Dendritic cell treated with granulocyte-macrophage colony-stimulating factor and Interleukin-4, amounts not matched to agents 40 ng/mL and 50 ng/mL, for 4 days (primary cell): ENCODE measurements at regions of chrX and their contacts with region 1.

Region 1: DNA sequence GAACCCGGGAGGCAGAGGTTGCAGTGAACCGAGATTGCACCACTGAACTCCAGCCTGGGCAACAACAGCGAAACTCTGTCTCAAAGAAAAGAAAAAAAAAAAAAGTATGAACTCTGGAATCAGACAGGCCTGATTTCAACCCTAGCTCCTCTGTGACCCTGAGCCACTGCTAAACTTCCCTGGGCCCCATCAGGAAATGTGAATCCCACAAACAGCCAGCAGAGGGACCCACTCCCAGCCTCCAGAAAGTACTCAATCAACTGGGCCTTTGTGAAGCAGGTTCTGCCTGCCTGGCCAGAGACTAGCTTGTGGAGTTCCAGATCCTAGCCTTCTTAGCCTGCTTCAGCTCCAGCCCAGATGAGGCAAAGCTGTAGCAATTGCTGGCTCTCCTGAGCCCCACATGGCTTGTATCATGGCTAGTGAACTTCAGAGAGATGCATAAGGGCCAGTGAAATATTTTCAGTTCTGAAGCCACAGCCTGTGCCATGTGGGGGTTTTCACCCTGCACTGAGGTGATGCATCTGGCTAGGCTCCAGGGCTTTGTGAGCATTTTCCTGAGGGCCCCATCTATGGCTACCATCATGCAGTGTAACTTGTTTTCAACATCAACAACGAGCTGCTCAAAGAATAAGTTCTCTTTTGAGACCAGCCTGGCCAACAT is 7.2 kb upstream of the IDS start:
- H3K4me3 Mint-ChIP-seq: no peak overlapping the region
- H3K27ac Mint-ChIP-seq: no peak overlapping the region
- H3K4me1 Mint-ChIP-seq: peaks cover 42% of the 10 kb centered on the region
- H3K27me3 Mint-ChIP-seq: peaks cover 7% of the 10 kb centered on the region

Region 2: DNA sequence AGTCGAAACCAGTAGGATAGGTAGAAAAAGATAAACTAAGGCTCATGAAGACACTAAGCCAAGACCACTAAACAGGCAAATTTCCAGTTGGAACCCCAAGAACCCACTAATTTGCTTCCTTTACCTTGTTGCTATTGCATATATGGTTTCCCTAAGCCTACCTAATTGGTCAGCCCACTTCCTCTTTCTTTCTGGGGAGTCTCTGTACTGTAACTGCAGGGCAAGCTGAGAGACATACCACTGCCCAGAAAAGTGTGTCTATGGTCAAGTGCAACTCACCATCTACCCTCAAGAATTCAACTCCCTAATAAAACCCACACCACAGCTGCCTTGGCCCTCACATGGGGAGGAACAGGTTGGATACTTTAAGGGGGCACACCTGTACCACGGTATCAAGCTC is 35.8 kb before region 1 on chrX:
- intact Hi-C with region 1: no loop called
- H3K4me3 Mint-ChIP-seq: no peak overlapping the region
- H3K27ac Mint-ChIP-seq: no peak overlapping the region
- H3K4me1 Mint-ChIP-seq: no peaks in the 10 kb centered on the region
- H3K27me3 Mint-ChIP-seq: peaks cover 3% of the 10 kb centered on the region

Region 3: DNA sequence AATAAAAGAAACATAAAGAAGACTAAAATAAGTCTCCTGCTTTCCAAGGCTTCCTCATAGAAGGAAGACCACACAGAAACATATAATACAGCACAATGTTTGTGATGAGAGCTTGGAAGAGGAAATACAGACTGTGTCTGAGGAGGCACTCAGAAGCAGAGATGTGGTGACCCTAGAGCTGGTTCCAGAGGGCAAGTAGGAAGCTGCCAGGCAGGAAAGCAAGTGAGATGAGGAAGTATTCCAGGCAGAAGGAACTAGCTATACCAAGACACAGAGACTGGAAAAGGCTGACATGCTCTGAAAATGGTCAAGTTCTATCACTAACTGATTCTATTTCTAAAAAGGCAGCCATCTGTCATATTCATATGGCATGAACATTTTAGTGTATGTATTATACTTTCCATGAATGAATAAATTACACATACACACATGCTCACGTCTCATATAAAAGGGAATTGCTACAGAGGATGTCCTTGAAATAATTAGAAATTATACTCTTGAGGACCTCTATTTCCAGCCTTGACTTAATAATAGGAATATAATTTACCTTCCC is 99.3 kb after region 1 on chrX:
- intact Hi-C with region 1: loop called (anchors 10 kb)
- H3K4me3 Mint-ChIP-seq: no peak overlapping the region
- H3K27ac Mint-ChIP-seq: no peak overlapping the region
- H3K4me1 Mint-ChIP-seq: peaks cover 8% of the 10 kb centered on the region
- H3K27me3 Mint-ChIP-seq: no peaks in the 10 kb centered on the region